ENCODE measurements at regions of chr16 and their contacts with region 1.

Region 1: DNA sequence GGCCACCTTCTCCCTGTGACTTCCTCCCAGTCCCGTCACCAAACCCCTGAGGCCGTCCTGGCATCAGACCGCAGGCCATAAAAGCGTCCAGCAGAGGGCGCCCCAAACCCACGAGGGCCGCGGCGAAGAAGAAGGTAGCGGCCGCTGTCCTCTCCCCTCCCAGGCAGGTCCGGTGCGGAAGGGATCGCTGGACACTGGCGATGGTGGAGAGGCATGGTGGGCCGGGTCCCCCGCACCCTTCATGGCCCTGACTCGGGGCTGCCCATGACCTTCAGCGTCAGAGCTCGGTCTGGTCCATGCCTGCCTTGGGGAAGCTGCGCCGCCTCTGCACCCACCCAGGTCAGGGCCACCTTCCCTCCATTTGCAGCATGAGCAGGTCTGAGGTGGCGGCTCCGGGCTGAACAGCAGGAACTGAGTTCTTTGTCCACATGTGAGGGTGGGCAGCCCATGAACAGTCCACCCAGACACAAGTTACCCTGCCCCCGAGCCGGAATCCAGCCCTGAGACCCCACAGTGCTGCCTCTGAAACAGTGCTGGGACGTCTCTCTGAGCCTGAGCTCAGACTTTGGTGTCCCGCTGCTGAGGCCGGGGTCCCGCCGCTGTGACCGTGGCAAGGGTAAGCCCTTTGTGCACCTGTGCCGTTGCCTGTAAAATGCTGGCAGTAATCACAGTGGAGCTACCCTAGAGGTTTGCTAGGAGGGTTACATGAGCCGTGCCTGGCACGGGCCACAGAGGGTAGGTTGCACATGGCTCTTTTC is 40.8 kb upstream of the CMIP start:
- DNase-seq: peak; percentile 79 to 93 (median 86)
- ATAC-seq: peak; percentile 68 to 96 (median 94)
- H3K4me3 ChIP-seq: peak overlapping the region in 8 of 12 donors; percentile 6 to 38 (median 28)
- H3K27ac ChIP-seq: no peak overlapping the region
- H3K4me1 ChIP-seq: peaks cover 0 to 19% (median 10%) of the 10 kb centered on the region in 12 donors
- H3K27me3 ChIP-seq: no peaks in the 10 kb centered on the region
- CTCF ChIP-seq: peak; percentile 91 to 98 (median 95)
- POLR2A ChIP-seq: no peak

Region 2: GRCh38 chr16:81366316-81366932 is 37.4 kb before region 1 on chr16:
- intact Hi-C with region 1: loop called in 2 of 10 experiments (anchors 5 kb)
- DNase-seq: no peak
- ATAC-seq: peak in 3 of 4 donors; percentile 60 to 74 (median 61)
- H3K4me3 ChIP-seq: no peak overlapping the region
- H3K27ac ChIP-seq: no peak overlapping the region
- H3K4me1 ChIP-seq: peaks cover 0 to 25% (median 6%) of the 10 kb centered on the region in 12 donors
- H3K27me3 ChIP-seq: no peaks in the 10 kb centered on the region
- CTCF ChIP-seq: peak; percentile 49 to 76 (median 62)
- POLR2A ChIP-seq: no peak

Region 3: GRCh38 chr16:81493755-81494433 is 90.1 kb after region 1 on chr16:
- intact Hi-C with region 1: no loop called
- DNase-seq: peak in 1 of 5 donors; percentile 24
- ATAC-seq: peak; percentile 30 to 85 (median 54)
- H3K4me3 ChIP-seq: no peak overlapping the region
- H3K27ac ChIP-seq: peak overlapping the region in 11 of 12 donors; percentile 13 to 81 (median 74)
- H3K4me1 ChIP-seq: peaks cover 3 to 96% (median 47%) of the 10 kb centered on the region in 12 donors
- H3K27me3 ChIP-seq: no peaks in the 10 kb centered on the region
- CTCF ChIP-seq: no peak
- POLR2A ChIP-seq: no peak

Region 4: DNA sequence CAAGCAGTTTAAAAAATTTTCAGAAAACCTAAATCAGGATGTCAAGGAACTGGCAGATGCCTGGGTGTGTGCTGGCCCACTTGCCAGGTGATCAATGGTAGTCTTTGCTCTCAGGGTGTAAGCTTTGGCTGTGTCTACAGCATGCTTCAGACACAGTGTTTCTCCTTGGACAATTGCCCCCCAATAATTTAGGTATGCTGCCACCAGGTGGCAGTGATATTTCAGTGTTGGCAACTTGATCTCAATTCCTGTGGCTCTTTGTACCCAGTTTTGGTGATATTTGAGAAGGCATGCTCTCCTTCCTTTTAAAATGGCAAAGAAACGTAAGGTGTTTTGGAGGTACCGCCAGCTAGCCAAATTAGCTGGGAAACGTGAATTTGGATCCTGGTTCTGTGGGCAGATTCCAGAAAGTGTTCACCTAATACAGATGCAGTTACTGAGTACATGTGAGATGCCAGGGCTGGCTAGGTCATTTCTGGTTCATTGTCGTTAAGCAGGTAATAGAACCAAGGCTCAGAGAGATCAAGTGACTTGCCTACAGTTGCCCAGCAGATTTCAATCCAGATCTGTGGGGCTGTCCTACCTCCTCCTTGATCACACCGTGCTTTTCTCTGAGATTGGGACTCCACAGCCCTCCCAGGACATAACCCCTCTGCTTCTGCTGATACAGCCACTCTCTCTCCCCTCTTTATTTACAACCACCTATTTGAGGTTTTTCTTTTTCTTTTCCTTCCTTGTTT is 219.7 kb after region 1 on chr16:
- intact Hi-C with region 1: loop called in 8 of 10 experiments (anchors 5 to 10 kb)
- DNase-seq: peak in 1 of 5 donors; percentile 29
- ATAC-seq: no peak
- H3K4me3 ChIP-seq: no peak overlapping the region
- H3K27ac ChIP-seq: no peak overlapping the region
- H3K4me1 ChIP-seq: peaks cover 0 to 18% (median 13%) of the 10 kb centered on the region in 12 donors
- H3K27me3 ChIP-seq: no peaks in the 10 kb centered on the region
- CTCF ChIP-seq: peak; percentile 39 to 67 (median 55)
- POLR2A ChIP-seq: no peak

Region 5: GRCh38 chr16:81696961-81697615 is 293.3 kb after region 1 on chr16:
- intact Hi-C with region 1: loop called in 2 of 10 experiments (anchors 10 kb)
- DNase-seq: peak in 3 of 5 donors; percentile 42 to 73 (median 52)
- ATAC-seq: peak in 2 of 4 donors; percentile 49
- H3K4me3 ChIP-seq: no peak overlapping the region
- H3K27ac ChIP-seq: peak overlapping the region in 3 of 12 donors; percentile 27 to 46 (median 40)
- H3K4me1 ChIP-seq: peaks cover 0 to 36% (median 19%) of the 10 kb centered on the region in 12 donors
- H3K27me3 ChIP-seq: no peaks in the 10 kb centered on the region
- CTCF ChIP-seq: peak; percentile 32 to 71 (median 58)
- POLR2A ChIP-seq: no peak

Region 6: GRCh38 chr16:81730090-81731051 is 326.6 kb after region 1 on chr16:
- intact Hi-C with region 1: loop called in 2 of 10 experiments (anchors 2 to 5 kb)
- DNase-seq: peak; percentile 89 to 94 (median 89)
- ATAC-seq: peak; percentile 90 to 97 (median 96)
- H3K4me3 ChIP-seq: peak overlapping the region in 11 of 12 donors; percentile 2 to 54 (median 44)
- H3K27ac ChIP-seq: peak overlapping the region in 10 of 12 donors; percentile 24 to 76 (median 62)
- H3K4me1 ChIP-seq: peaks cover 0 to 16% (median 10%) of the 10 kb centered on the region in 12 donors
- H3K27me3 ChIP-seq: no peaks in the 10 kb centered on the region
- CTCF ChIP-seq: peak; percentile 23 to 74 (median 54)
- POLR2A ChIP-seq: peak in 1 of 2 donors; percentile 27